ENCODE measurements at regions of chr5 and their contacts with region 1.

Region 1: GRCh38 chr5:31021181-31021624 is 172.3 kb upstream of the CDH6 start:
- DNase-seq: no peak
- H3K4me3 ChIP-seq: no peak overlapping the region
- H3K27ac ChIP-seq: no peak overlapping the region
- H3K4me1 ChIP-seq: no peaks in the 10 kb centered on the region
- H3K27me3 ChIP-seq: no peaks in the 10 kb centered on the region
- CTCF ChIP-seq: no peak

Region 2: GRCh38 chr5:31007672-31008071 is 13.5 kb before region 1 on chr5:
- intact Hi-C with region 1: loop called (anchors 1 kb)
- DNase-seq: no peak
- H3K4me3 ChIP-seq: no peak overlapping the region
- H3K27ac ChIP-seq: no peak overlapping the region
- H3K4me1 ChIP-seq: no peaks in the 10 kb centered on the region
- H3K27me3 ChIP-seq: no peaks in the 10 kb centered on the region
- CTCF ChIP-seq: no peak

Region 3: GRCh38 chr5:31078956-31079355 is 57.8 kb after region 1 on chr5:
- intact Hi-C with region 1: no loop called
- DNase-seq: no peak
- H3K4me3 ChIP-seq: no peak overlapping the region
- H3K27ac ChIP-seq: no peak overlapping the region
- H3K4me1 ChIP-seq: no peaks in the 10 kb centered on the region
- H3K27me3 ChIP-seq: no peaks in the 10 kb centered on the region
- CTCF ChIP-seq: no peak

Region 4: GRCh38 chr5:31096238-31096865 is 75.1 kb after region 1 on chr5:
- intact Hi-C with region 1: no loop called
- DNase-seq: no peak
- H3K4me3 ChIP-seq: no peak overlapping the region
- H3K27ac ChIP-seq: peak overlapping the region in 1 of 2 donors; percentile 36
- H3K4me1 ChIP-seq: peaks cover 0 to 20% (median 4%) of the 10 kb centered on the region in 4 donors
- H3K27me3 ChIP-seq: no peaks in the 10 kb centered on the region
- CTCF ChIP-seq: no peak

Region 5: GRCh38 chr5:31161781-31162181 is 140.6 kb after region 1 on chr5:
- intact Hi-C with region 1: no loop called
- DNase-seq: no peak
- H3K4me3 ChIP-seq: no peak overlapping the region
- H3K27ac ChIP-seq: peak overlapping the region in 1 of 2 donors; percentile 9
- H3K4me1 ChIP-seq: peaks cover 0 to 24% (median 2%) of the 10 kb centered on the region in 4 donors
- H3K27me3 ChIP-seq: no peaks in the 10 kb centered on the region
- CTCF ChIP-seq: no peak

Measured in tibial artery (tissue), 4 donors.